Calu3 (cell line): ENCODE measurements at regions of chr4 and their contacts with region 1.

Region 1: GRCh38 chr4:184136525-184136924 is 81.1 kb downstream of the ENPP6 start:
- DNase-seq: no peak
- H3K4me3 Mint-ChIP-seq: no peak overlapping the region
- H3K27ac Mint-ChIP-seq: no peak overlapping the region
- H3K4me1 Mint-ChIP-seq: no peaks in the 10 kb centered on the region
- H3K27me3 Mint-ChIP-seq: no peaks in the 10 kb centered on the region
- CTCF ChIP-seq: no peak

Region 2: GRCh38 chr4:183747931-183748670 is 388.4 kb before region 1 on chr4:
- CTCF ChIA-PET with region 1: no interaction called
- intact Hi-C with region 1: no loop called
- DNase-seq: no peak
- H3K4me3 Mint-ChIP-seq: no peak overlapping the region
- H3K27ac Mint-ChIP-seq: no peak overlapping the region
- H3K4me1 Mint-ChIP-seq: no peaks in the 10 kb centered on the region
- H3K27me3 Mint-ChIP-seq: no peaks in the 10 kb centered on the region
- CTCF ChIP-seq: no peak

Region 3: GRCh38 chr4:184147858-184148737 is 11.6 kb after region 1 on chr4:
- CTCF ChIA-PET with region 1: interaction called, 3 read pairs
- intact Hi-C with region 1: loop called (anchors 1 kb)
- DNase-seq: no peak
- H3K4me3 Mint-ChIP-seq: no peak overlapping the region
- H3K27ac Mint-ChIP-seq: no peak overlapping the region
- H3K4me1 Mint-ChIP-seq: no peaks in the 10 kb centered on the region
- H3K27me3 Mint-ChIP-seq: peaks cover 44% of the 10 kb centered on the region
- CTCF ChIP-seq: no peak